ENCODE measurements at regions of chr1 and their contacts with region 1.

Region 1: DNA sequence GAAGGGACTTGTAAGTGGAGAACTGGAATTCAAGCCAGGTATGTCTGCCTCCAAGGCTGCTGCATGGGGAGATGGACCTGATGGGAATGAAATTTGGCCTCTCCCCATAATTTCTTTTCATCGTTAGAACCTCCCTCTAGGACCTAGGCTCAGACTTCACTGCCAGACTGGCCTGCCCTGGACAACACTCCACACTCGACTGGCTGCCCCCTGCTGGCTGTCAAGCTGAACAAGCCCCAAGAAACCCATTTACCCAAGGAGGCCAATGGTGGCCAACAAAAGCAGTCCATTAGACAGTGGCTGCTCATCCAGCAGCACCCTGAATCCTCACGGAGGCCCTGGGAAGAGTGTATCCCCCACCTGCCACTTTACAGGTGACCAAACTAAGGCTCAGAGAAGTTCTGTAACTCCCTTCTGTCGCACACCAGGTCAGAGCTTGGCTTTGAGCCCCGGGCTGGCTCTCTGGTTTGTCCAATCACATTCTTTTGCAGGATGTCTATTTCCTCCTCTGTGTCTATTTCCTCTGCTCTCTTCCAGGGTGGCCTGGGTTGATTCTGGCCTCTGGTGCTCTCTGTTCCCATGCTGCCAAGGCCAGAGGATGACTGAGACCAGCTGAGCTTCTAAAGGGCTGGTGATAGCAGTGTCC is 3.8 kb downstream of the RNF186 start:
- DNase-seq: no peak
- H3K4me3 ChIP-seq: no peak overlapping the region
- CTCF ChIP-seq: peak; percentile 67

Region 2: GRCh38 chr1:19762175-19762779 is 49.1 kb before region 1 on chr1:
- CTCF ChIA-PET with region 1: interaction called, 64 read pairs
- POLR2A ChIA-PET with region 1: no interaction called
- DNase-seq: no peak
- H3K4me3 ChIP-seq: no peak overlapping the region
- CTCF ChIP-seq: peak; percentile 81

Region 3: DNA sequence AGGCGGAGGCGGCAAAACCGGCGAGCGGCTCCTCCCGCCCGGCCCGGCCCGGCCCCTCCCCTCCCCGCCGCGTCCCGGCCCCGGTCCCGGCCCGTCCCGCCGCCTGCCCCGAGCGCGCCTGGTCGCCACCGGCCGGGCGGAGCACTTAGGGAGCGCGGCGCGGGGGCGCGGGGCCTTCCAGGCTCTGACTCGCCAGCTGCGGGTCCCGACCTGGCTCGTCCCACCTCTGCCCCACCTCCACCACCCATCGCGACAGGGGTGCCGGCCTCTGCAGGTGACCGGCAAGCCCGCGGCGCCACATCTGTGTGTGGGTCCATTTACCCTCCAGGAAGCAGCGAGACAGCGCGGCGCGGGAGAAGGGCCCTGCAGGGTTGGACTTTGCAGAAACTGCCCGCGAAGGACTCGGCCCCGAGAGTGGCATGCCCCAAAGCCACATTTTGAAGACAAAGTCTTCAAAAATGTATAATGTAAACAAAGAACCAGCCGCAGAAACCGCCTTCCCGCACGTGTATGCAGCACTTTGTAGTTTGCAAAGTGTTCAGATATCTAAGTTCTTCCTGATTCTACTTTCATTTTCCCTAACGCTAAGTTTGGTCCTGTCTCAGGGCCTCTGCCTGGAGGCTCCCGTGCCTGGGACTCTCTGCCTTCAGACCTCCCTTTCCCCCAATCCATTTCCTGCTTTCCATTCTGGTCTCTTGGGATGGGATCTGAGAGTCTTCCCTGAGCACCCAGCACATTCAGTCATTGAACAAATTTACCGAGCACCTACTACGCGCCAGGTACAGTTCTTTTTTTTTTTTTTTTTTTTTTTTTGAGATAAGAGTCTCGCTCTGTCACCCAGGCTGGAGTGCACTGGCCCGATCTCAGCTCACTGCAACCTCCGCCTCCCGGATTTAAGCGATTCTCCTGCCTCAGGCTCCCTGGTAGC is 11.2 kb before region 1 on chr1 and contains the start of gene TMCO4:
- CTCF ChIA-PET with region 1: interaction called, 28 read pairs
- POLR2A ChIA-PET with region 1: no interaction called
- DNase-seq: peak; percentile 42
- H3K4me3 ChIP-seq: peak within 1 kb of the TSS; percentile 61
- CTCF ChIP-seq: no peak

Measured in AG04449 (cell line).